Lower leg skin (tissue), 4 donors: ENCODE measurements at regions of chr11 and their contacts with region 1.

Region 1: GRCh38 chr11:36672813-36673450 is 74.9 kb upstream of the RAG2 start:
- DNase-seq: peak in 1 of 2 donors; percentile 23
- H3K4me3 ChIP-seq: no peak overlapping the region
- CTCF ChIP-seq: no peak
- POLR2A ChIP-seq: no peak

Region 2: GRCh38 chr11:36564376-36565030 is 108.4 kb before region 1 on chr11:
- intact Hi-C with region 1: loop called (anchors 10 kb)
- DNase-seq: peak in 1 of 2 donors; percentile 24
- H3K4me3 ChIP-seq: no peak overlapping the region
- CTCF ChIP-seq: no peak
- POLR2A ChIP-seq: no peak

Region 3: DNA sequence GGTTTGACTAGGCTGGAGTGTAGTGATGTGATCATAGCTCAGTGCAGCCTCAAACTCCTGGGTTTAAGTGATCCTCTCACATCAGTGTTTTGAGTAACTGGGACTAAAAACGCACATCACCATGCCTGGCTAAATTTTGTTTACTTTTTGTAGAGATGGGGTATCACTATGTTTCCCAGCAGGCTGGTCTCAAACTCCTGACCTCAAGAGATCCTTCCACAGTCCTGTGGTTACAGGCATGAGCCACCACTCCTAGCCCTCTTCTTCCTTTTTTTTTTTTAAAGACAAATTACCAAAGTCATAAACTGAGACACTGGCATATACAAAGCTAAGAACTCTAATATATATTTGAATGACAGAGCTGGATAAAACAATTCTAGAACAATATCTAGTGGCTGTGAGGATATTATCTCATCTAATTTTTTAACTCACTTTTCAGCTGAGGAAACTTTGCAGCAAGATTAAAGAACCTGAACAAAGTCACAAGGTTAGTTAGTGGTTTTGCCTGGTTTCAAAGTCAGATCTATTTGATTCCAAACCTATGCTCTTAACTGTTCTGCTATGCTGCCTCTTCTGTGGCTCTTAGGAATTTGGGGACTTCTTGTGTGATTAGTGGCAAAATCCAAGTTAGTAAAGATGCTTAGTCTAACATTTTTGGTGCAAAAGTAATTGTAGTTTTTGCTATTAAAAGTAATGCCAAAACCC is 20.4 kb after region 1 on chr11:
- intact Hi-C with region 1: no loop called
- DNase-seq: no peak
- H3K4me3 ChIP-seq: no peak overlapping the region
- CTCF ChIP-seq: no peak
- POLR2A ChIP-seq: no peak